Dorsolateral prefrontal cortex (tissue), 120 donors: ENCODE measurements at regions of chr13 and their contacts with region 1.

Region 1: DNA sequence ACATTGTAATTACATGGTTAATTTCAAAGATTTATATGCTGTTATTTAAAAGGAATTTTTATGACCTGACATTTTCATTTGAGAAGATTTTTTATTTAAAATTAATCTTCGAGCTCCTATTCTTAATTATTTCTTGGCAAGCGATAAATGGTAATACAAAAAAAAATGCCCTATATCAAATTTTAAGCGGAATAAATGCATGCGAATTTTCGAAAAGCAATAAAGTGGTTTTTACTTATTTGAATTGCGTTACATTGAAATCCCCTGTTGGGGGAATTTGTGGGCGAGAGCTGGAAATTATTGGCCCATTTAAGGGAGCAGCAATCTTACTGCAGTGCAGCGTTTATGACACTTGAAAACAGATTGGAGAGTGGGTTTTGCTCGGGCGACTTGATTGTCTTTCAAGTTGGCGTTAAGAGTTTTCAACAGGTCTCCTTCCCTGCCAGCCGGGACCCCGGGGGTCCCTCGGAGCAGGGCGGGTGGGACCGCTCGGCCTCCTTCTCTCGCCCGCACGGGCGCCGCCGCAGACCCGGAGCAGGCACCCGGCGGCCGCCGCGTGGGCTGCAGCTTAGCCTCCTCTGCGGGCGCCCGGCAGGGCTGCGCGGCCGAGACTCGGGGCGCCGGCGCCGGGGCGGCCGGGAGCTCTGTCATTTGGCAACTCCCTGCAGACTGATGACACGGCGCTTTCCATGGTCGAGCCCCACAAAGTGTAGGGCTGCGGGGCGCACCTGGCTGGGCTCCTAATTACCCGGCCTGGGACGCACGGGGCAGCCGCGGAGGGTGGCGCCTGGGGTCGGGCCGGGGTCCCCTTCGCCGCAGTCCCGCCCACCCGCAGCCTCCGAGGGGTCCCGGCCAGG is 255.1 kb upstream of the SOX21 start:
- DNase-seq: peak in 2 of 10 donors; percentile 42 to 58
- H3K4me3 ChIP-seq: peak overlapping the region; percentile 22 to 71 (median 54)
- H3K27ac ChIP-seq: peak overlapping the region in 57 of 59 donors; percentile 5 to 90 (median 76)
- H3K27me3 ChIP-seq: peaks cover 0 to 86% (median 57%) of the 10 kb centered on the region in 45 donors
- CTCF ChIP-seq: no peak

Region 2: GRCh38 chr13:94800423-94800822 is 167.0 kb before region 1 on chr13:
- intact Hi-C with region 1: loop called in 1 of 2 experiments (anchors 10 kb)
- DNase-seq: no peak
- H3K4me3 ChIP-seq: no peak overlapping the region
- H3K27ac ChIP-seq: no peak overlapping the region
- H3K27me3 ChIP-seq: no peaks in the 10 kb centered on the region
- CTCF ChIP-seq: peak in 22 of 56 donors; percentile 7 to 58 (median 28)

Region 3: GRCh38 chr13:94825507-94825906 is 141.9 kb before region 1 on chr13:
- intact Hi-C with region 1: no loop called
- DNase-seq: peak in 7 of 10 donors; percentile 6 to 73 (median 58)
- H3K4me3 ChIP-seq: no peak overlapping the region
- H3K27ac ChIP-seq: peak overlapping the region in 1 of 59 donors; percentile 29
- H3K27me3 ChIP-seq: peaks cover 0 to 8% (median 0%) of the 10 kb centered on the region in 45 donors
- CTCF ChIP-seq: no peak

Region 4: DNA sequence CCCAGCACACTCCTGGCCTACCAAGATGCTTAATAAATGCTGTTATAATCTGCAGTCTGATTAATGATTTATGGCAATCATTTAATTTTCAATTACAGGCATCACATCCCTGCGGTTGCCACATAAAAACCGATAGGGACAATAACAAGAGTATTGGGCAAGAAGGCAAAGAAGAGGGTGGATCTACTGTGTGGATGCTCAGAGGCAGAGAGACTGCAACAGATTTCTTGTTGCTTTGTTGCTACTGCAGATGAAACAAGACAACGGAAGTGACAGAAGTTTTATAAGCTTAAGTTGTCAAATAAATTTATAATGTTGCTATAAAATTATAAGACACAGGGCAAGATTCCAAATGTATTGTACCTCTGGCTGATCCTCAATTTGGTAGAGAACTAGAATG is 179.1 kb after region 1 on chr13:
- intact Hi-C with region 1: no loop called
- DNase-seq: no peak
- H3K4me3 ChIP-seq: no peak overlapping the region
- H3K27ac ChIP-seq: no peak overlapping the region
- H3K27me3 ChIP-seq: no peaks in the 10 kb centered on the region
- CTCF ChIP-seq: no peak